ENCODE measurements at regions of chr4 and their contacts with region 1.

Region 1: DNA sequence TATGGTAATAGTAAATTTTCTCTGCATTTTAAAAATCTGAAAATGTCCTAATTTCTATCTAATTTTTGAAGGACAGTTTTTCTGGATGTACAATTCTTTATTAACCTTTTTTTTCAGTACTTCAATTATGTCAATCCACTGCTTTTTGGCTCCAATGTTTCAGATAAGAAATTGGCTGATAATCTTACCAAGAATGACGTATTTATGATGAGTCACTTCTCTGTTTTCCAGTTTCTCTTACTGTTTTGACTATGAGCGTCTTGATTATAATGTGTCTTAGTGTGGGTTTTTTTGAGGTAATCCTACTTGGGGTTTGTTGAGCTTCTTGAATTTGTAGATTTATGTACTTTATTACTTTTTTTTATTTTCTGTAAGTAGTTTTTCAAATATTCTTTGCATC is 47.2 kb downstream of the UGT2B11 start:
- DNase-seq: no peak
- H3K4me3 ChIP-seq: no peak overlapping the region
- H3K27ac ChIP-seq: no peak overlapping the region
- H3K4me1 ChIP-seq: peaks cover 0 to 12% (median 0%) of the 10 kb centered on the region in 4 donors
- H3K27me3 ChIP-seq: no peaks in the 10 kb centered on the region
- CTCF ChIP-seq: no peak
- EP300 ChIP-seq: no peak
- POLR2A ChIP-seq: no peak

Region 2: GRCh38 chr4:69210911-69211310 is 43.6 kb after region 1 on chr4:
- in situ Hi-C with region 1: no loop called
- intact Hi-C with region 1: no loop called
- DNase-seq: no peak
- H3K4me3 ChIP-seq: no peak overlapping the region
- H3K27ac ChIP-seq: no peak overlapping the region
- H3K4me1 ChIP-seq: peaks cover 0 to 4% (median 0%) of the 10 kb centered on the region in 4 donors
- H3K27me3 ChIP-seq: no peaks in the 10 kb centered on the region
- CTCF ChIP-seq: no peak
- EP300 ChIP-seq: no peak
- POLR2A ChIP-seq: no peak

Region 3: DNA sequence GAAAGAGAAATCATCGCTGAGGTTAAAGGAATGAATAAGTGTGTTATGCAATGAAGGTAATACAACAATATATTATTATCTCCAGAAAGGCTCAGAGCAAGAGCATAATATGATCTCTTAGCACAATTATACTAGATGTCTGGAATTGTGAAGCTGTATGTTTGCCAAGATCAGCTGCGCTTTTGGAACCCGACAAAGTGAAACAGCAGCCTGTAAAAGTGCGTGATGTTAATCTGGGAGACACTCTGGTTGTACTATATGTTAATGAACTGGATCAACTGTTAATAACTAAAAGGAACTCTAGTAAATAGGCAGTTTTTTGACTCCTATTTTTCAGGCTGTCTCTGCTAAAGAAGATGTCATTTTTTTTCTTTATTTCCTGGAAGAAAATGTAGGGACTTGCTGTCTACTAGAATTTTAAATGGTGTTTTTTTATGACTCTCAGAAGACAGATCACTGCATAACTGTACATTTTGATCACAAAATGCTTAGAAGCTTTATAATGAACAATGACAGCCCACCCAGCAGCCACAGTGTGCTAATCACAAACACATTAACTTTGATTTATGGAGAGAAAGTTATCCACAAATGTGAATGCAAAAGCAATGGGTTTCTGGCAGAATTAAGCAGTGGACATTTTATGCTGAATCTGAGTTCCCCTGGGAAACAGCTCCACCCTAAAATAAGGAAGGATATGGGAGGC is 163.2 kb after region 1 on chr4:
- in situ Hi-C with region 1: loop called in 1 of 4 experiments (anchors 5 kb)
- intact Hi-C with region 1: no loop called
- DNase-seq: no peak
- H3K4me3 ChIP-seq: no peak overlapping the region
- H3K27ac ChIP-seq: no peak overlapping the region
- H3K4me1 ChIP-seq: peaks cover 0 to 10% (median 5%) of the 10 kb centered on the region in 4 donors
- H3K27me3 ChIP-seq: no peaks in the 10 kb centered on the region
- CTCF ChIP-seq: no peak
- EP300 ChIP-seq: no peak
- POLR2A ChIP-seq: no peak